Dendritic cell treated with granulocyte-macrophage colony-stimulating factor and Interleukin-4, amounts not matched to agents 40 ng/mL and 50 ng/mL, for 4 days (primary cell): ENCODE measurements at regions of chr22 and their contacts with region 1.

Region 1: GRCh38 chr22:36775964-36776669 is at the start of gene IFT27:
- H3K4me3 Mint-ChIP-seq: peak within 1 kb of the TSS; percentile 80
- H3K27ac Mint-ChIP-seq: peak within 1 kb of the TSS; percentile 80
- H3K4me1 Mint-ChIP-seq: peaks cover 26% of the 10 kb centered on the region
- H3K27me3 Mint-ChIP-seq: peaks cover 2% of the 10 kb centered on the region

Region 2: DNA sequence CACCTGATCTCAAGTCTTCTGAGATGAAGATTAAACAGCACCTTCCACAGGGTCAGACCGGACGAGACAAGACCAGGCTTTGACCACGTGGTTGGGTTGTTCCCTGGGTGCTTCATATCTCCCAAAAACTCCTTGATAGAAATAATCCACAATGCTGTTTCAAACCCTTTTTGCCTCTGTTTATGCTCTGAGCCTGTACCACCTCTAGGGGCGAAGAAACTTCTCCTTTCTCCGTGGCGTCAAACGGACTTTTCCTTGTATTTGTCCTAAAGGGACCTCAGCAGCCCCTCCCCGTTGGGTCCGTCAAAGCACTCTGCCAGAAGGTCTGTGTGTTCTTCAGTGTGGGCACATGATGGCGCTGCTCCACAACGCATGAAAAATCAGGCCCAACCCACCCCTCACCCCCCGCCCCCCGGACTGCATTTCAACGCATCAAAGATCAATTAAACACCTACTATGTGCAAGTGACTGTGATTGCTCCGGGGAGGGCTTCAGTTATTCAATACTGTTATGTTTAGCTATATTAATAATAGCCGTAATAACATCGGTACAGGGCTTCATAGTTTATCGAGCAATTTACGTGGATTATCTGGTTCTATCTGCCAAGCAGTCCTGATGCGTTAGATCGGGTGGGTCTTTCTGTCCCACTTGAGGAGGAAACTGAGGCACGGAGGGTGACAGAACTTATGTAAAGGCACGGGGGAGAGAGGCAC is 229.9 kb before region 1 on chr22:
- intact Hi-C with region 1: loop called (anchors 2 kb)
- H3K4me3 Mint-ChIP-seq: no peak overlapping the region
- H3K27ac Mint-ChIP-seq: no peak overlapping the region
- H3K4me1 Mint-ChIP-seq: peaks cover 23% of the 10 kb centered on the region
- H3K27me3 Mint-ChIP-seq: peaks cover 22% of the 10 kb centered on the region

Region 3: GRCh38 chr22:36856121-36856791 is 80.1 kb after region 1 on chr22:
- intact Hi-C with region 1: no loop called
- H3K4me3 Mint-ChIP-seq: peak overlapping the region; percentile 63
- H3K27ac Mint-ChIP-seq: peak overlapping the region; percentile 40
- H3K4me1 Mint-ChIP-seq: peaks cover 58% of the 10 kb centered on the region
- H3K27me3 Mint-ChIP-seq: peaks cover 5% of the 10 kb centered on the region

Region 4: GRCh38 chr22:36977947-36978660 is 202.0 kb after region 1 on chr22:
- intact Hi-C with region 1: loop called (anchors 1 kb)
- H3K4me3 Mint-ChIP-seq: peak overlapping the region; percentile 74
- H3K27ac Mint-ChIP-seq: peak overlapping the region; percentile 87
- H3K4me1 Mint-ChIP-seq: peaks cover 29% of the 10 kb centered on the region
- H3K27me3 Mint-ChIP-seq: peaks cover 26% of the 10 kb centered on the region

Region 5: GRCh38 chr22:37043828-37044538 is 267.9 kb after region 1 on chr22:
- intact Hi-C with region 1: loop called (anchors 10 kb)
- H3K4me3 Mint-ChIP-seq: no peak overlapping the region
- H3K27ac Mint-ChIP-seq: no peak overlapping the region
- H3K4me1 Mint-ChIP-seq: peaks cover 40% of the 10 kb centered on the region
- H3K27me3 Mint-ChIP-seq: peaks cover 5% of the 10 kb centered on the region